WTC11 (cell line): ENCODE measurements at regions of chr1 and their contacts with region 1.

Region 1: GRCh38 chr1:111481387-111482221 is 7.8 kb downstream of the C1orf162 start:
- DNase-seq: peak; percentile 74
- ATAC-seq: peak; percentile 98
- H3K4me3 Mint-ChIP-seq: no peak overlapping the region
- H3K27ac Mint-ChIP-seq: no peak overlapping the region
- H3K4me1 Mint-ChIP-seq: no peaks in the 10 kb centered on the region
- H3K27me3 Mint-ChIP-seq: no peaks in the 10 kb centered on the region
- CTCF ChIP-seq: peak; percentile 42

Region 2: DNA sequence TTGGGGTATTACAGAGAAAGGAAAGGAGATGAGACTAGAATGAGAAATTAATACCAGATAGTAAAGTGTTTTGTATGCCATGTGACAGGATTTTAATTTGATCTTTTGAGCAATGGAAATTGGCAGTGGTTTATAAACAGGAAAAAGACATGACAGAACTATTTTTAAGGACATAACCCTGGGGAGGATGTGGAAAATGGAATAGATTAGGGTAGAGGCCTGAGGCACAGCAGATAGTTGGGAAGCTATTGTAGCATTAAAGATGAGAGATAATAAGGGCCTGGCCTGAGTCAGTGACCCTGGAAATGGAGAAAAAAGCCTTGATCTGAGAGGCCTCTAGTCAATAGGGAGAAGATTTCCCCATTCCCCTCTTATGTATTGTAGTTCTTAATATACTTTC is 784.8 kb before region 1 on chr1:
- CTCF ChIA-PET with region 1: no interaction called
- POLR2A ChIA-PET with region 1: no interaction called
- DNase-seq: no peak
- ATAC-seq: no peak
- H3K4me3 Mint-ChIP-seq: no peak overlapping the region
- H3K27ac Mint-ChIP-seq: no peak overlapping the region
- H3K4me1 Mint-ChIP-seq: no peaks in the 10 kb centered on the region
- H3K27me3 Mint-ChIP-seq: no peaks in the 10 kb centered on the region; the same call in 1 of the 2 replicates
- CTCF ChIP-seq: no peak

Region 3: DNA sequence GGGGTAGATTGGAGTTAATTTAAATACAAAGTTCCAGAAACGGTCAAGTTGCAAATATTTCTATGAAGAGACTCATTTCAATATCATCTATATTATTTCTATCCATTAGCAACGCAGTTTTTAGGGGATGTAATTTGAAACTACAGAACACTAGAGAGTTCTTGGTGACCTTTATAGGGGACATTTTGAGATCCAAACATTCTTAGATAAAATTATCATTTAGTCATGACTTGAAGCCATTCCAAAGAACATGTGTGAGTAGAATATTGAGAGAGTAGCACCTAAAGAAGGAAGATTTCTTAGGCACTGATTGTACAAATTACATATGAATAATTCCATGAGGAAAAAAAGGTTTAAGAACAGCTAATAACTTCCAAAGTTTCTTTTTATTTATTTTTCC is 171.9 kb before region 1 on chr1:
- CTCF ChIA-PET with region 1: no interaction called
- POLR2A ChIA-PET with region 1: no interaction called
- DNase-seq: no peak
- ATAC-seq: no peak
- H3K4me3 Mint-ChIP-seq: no peak overlapping the region
- H3K27ac Mint-ChIP-seq: no peak overlapping the region
- H3K4me1 Mint-ChIP-seq: peaks cover 7% of the 10 kb centered on the region
- H3K27me3 Mint-ChIP-seq: no peaks in the 10 kb centered on the region
- CTCF ChIP-seq: no peak

Region 4: GRCh38 chr1:111392460-111392945 is 89.1 kb before region 1 on chr1:
- CTCF ChIA-PET with region 1: no interaction called
- POLR2A ChIA-PET with region 1: no interaction called
- DNase-seq: no peak
- ATAC-seq: no peak
- H3K4me3 Mint-ChIP-seq: no peak overlapping the region
- H3K27ac Mint-ChIP-seq: no peak overlapping the region
- H3K4me1 Mint-ChIP-seq: peaks cover 9% of the 10 kb centered on the region; the same call in 1 of the 2 replicates
- H3K27me3 Mint-ChIP-seq: no peaks in the 10 kb centered on the region; the same call in 1 of the 2 replicates
- CTCF ChIP-seq: no peak

Region 5: DNA sequence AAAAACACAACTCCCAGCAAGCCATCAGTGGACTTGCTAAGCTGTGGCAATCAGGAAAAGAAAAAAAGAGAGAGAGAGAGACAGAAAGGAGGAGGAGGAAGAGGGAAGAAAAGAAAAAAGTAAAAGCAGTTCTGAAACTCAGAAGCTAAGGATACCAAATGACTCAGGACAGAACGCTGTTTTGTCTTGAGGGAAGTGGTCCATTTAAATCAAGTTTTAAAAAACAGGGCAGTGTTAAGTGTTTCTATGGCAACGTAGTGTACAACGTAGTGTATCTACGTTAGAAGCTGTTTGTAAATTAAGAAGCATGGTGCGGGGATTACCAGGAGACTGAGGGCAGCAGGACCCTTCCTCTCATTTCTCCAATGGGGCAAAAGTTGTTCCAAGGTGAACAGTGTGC is 16.0 kb after region 1 on chr1:
- CTCF ChIA-PET with region 1: interaction called, 12 read pairs
- POLR2A ChIA-PET with region 1: no interaction called
- DNase-seq: no peak
- ATAC-seq: no peak
- H3K4me3 Mint-ChIP-seq: no peak overlapping the region
- H3K27ac Mint-ChIP-seq: no peak overlapping the region
- H3K4me1 Mint-ChIP-seq: peaks cover 6% of the 10 kb centered on the region
- H3K27me3 Mint-ChIP-seq: peaks cover 3% of the 10 kb centered on the region; the same call in 1 of the 2 replicates
- CTCF ChIP-seq: no peak

Region 6: DNA sequence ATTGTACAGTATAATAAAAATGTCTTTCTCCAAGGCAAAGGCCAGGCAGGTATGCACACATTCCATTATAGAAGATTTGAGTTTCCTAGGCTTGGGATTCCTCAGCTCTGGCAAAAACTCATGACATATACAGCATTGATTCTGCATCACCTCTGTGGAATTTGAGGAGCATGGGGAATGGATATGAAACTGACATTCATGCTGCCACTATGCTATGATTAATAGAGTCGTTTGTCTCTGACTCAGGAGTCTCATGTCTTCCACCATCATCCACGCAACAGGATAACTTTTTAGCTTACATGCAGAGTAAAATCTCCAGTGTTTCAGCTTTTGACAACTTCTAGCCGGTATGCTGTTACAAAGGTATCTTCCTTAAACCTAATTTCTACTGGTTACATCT is 71.6 kb after region 1 on chr1:
- CTCF ChIA-PET with region 1: no interaction called
- POLR2A ChIA-PET with region 1: no interaction called
- DNase-seq: no peak
- ATAC-seq: no peak
- H3K4me3 Mint-ChIP-seq: no peak overlapping the region
- H3K27ac Mint-ChIP-seq: no peak overlapping the region
- H3K4me1 Mint-ChIP-seq: no peaks in the 10 kb centered on the region
- H3K27me3 Mint-ChIP-seq: no peaks in the 10 kb centered on the region
- CTCF ChIP-seq: no peak

Region 7: GRCh38 chr1:111725192-111725591 is 243.6 kb after region 1 on chr1:
- CTCF ChIA-PET with region 1: interaction called, 12 read pairs
- POLR2A ChIA-PET with region 1: no interaction called
- DNase-seq: no peak
- ATAC-seq: peak; percentile 16
- H3K4me3 Mint-ChIP-seq: no peak overlapping the region
- H3K27ac Mint-ChIP-seq: no peak overlapping the region
- H3K4me1 Mint-ChIP-seq: peaks cover 64% of the 10 kb centered on the region
- H3K27me3 Mint-ChIP-seq: no peaks in the 10 kb centered on the region
- CTCF ChIP-seq: no peak

Region 8: GRCh38 chr1:111747282-111747734 is 265.7 kb after region 1 on chr1:
- CTCF ChIA-PET with region 1: interaction called, 21 read pairs
- POLR2A ChIA-PET with region 1: no interaction called
- DNase-seq: peak; percentile 65
- ATAC-seq: peak; percentile 73
- H3K4me3 Mint-ChIP-seq: no peak overlapping the region
- H3K27ac Mint-ChIP-seq: no peak overlapping the region; the same call in 1 of the 2 replicates
- H3K4me1 Mint-ChIP-seq: peaks cover 31% of the 10 kb centered on the region
- H3K27me3 Mint-ChIP-seq: peaks cover 12% of the 10 kb centered on the region
- CTCF ChIP-seq: peak; percentile 72

Region 9: GRCh38 chr1:111755331-111756123 is 273.9 kb after region 1 on chr1 and contains the start of gene DDX20:
- CTCF ChIA-PET with region 1: interaction called, 16 read pairs
- POLR2A ChIA-PET with region 1: no interaction called
- DNase-seq: peak; percentile 90
- ATAC-seq: peak; percentile 86
- H3K4me3 Mint-ChIP-seq: peak within 1 kb of the TSS; percentile 97
- H3K27ac Mint-ChIP-seq: peak within 1 kb of the TSS; percentile 99
- H3K4me1 Mint-ChIP-seq: peaks cover 19% of the 10 kb centered on the region
- H3K27me3 Mint-ChIP-seq: peaks cover 7% of the 10 kb centered on the region
- CTCF ChIP-seq: peak; percentile 69; the same call in 1 of the 2 replicates
- total RNA-seq, gene DDX20: 15.0 to 19.3 TPM (median 17.9 TPM) in 3 replicates

Region 10: DNA sequence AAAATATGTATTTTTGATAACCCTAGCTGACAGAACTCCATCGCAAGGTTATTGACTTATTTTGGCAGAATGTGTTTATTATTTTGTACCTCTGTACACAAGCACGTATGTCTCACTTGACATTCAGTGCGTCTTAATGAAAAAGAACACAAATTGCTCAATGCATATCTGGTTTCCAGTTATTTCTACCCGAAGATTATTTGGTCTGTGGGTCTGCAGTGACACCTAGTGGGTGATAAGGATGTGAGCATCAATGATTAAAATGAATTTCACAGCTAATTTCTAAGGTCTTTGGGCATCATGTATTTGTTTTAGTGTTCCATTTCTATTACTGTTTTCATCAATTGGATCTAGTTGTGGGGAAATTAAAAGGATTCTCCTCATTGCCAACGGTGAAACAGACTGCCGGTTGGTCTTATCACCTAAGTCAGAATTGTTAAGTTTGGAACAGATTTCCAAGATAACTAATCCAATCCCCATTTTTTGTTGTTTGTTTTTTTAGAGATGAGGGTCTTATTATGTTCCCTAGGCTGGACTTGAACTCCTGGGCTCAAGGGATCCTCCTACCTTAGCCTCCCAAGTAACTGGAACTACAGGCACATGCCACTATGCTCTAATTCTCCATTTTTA is 288.0 kb after region 1 on chr1:
- CTCF ChIA-PET with region 1: interaction called, 32 read pairs
- POLR2A ChIA-PET with region 1: no interaction called
- DNase-seq: no peak
- ATAC-seq: no peak
- H3K4me3 Mint-ChIP-seq: no peak overlapping the region
- H3K27ac Mint-ChIP-seq: no peak overlapping the region
- H3K4me1 Mint-ChIP-seq: no peaks in the 10 kb centered on the region
- H3K27me3 Mint-ChIP-seq: no peaks in the 10 kb centered on the region; the same call in 1 of the 2 replicates
- CTCF ChIP-seq: peak; percentile 60